ENCODE measurements at regions of chr1 and their contacts with region 1.

Region 1: GRCh38 chr1:45512641-45513054 is 9.0 kb downstream of the PRDX1 start:
- DNase-seq: peak in 1 of 2 donors; percentile 65
- ATAC-seq: peak; percentile 48 to 81 (median 61)
- H3K4me3 ChIP-seq: no peak overlapping the region
- H3K27ac ChIP-seq: no peak overlapping the region
- H3K4me1 ChIP-seq: peaks cover 0 to 44% (median 20%) of the 10 kb centered on the region in 9 donors
- H3K27me3 ChIP-seq: no peaks in the 10 kb centered on the region
- CTCF ChIP-seq: peak; percentile 29 to 78 (median 72)

Region 2: DNA sequence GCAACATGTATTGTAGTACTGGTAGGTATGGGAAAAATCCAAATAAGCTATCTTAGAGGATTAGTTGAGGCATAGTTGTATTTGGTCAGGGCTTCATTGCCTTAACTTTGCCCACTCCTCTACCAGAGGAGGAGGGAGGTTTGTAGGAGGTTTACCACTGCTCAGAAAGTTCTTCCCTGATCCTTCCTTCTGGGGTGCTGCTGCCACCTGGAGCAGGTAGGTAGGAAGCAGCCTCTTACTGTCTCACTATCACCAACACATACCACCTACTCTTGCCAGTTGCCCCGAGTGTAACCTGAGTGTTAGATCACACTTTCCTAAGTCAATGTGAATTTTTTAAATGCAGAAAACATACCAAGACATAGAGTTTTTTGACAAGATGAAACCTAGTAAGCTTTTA is 282.1 kb before region 1 on chr1:
- intact Hi-C with region 1: no loop called
- DNase-seq: no peak
- ATAC-seq: no peak
- H3K4me3 ChIP-seq: no peak overlapping the region
- H3K27ac ChIP-seq: no peak overlapping the region
- H3K4me1 ChIP-seq: no peaks in the 10 kb centered on the region
- H3K27me3 ChIP-seq: no peaks in the 10 kb centered on the region
- CTCF ChIP-seq: no peak

Region 3: DNA sequence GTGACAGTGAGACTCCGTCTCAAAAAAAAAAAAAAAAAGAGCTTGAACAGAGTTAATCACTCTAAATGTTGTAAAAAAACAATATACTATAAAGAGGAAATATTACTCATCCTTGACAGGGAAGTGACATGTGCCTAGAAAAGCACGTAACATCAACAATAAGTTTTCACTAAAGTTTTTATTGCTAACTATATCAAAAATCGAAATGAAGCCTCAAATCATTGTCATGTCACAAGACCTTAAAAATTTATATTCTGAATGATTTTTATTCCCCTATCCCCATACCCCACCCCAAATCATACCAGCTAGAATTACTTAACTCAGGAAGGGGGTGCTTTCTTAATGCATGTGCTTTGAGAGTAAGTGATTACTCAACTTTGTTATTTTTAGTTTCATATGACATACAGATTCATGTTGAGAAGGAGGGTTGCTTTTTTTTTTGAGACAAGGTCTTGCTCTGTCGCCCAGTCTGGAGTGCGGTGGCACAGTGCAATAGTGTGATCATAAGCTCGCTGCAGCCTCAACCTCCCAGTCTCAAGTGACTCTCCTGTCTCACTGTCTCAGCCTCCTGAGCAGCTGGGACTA is 118.8 kb before region 1 on chr1:
- intact Hi-C with region 1: no loop called
- DNase-seq: no peak
- ATAC-seq: peak in 6 of 8 donors; percentile 16 to 76 (median 61)
- H3K4me3 ChIP-seq: peak overlapping the region in 1 of 10 donors; percentile 12
- H3K27ac ChIP-seq: peak overlapping the region in 3 of 10 donors; percentile 50 to 85 (median 56)
- H3K4me1 ChIP-seq: peaks cover 0 to 31% (median 7%) of the 10 kb centered on the region in 9 donors
- H3K27me3 ChIP-seq: no peaks in the 10 kb centered on the region
- CTCF ChIP-seq: no peak

Region 4: DNA sequence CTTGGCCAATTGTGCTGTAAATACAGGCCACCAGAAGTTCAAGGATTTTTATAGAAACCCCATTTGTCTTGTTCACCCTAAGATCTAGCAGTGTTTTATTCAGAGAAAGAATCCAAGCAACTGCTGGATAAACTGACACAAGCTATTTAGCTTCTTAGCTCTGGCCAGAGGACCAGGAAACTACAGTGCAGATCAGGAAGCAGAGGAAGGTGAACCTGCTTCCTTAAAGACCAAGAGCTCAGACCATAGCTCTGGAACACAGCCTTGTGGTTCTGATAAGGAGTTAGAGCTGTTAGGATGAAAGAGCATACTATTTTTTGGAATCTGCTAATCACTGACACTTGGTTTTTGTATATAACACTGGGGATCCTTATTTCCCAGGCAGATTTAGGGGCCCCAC is 116.4 kb after region 1 on chr1:
- intact Hi-C with region 1: loop called in 1 of 10 experiments (anchors 5 kb)
- DNase-seq: no peak
- ATAC-seq: peak in 4 of 8 donors; percentile 44 to 56 (median 52)
- H3K4me3 ChIP-seq: no peak overlapping the region
- H3K27ac ChIP-seq: no peak overlapping the region
- H3K4me1 ChIP-seq: peaks cover 0 to 13% (median 0%) of the 10 kb centered on the region in 9 donors
- H3K27me3 ChIP-seq: no peaks in the 10 kb centered on the region
- CTCF ChIP-seq: no peak

Measured in heart right ventricle (tissue), 16 donors.